ENCODE measurements at regions of chr11 and their contacts with region 1.

Region 1: GRCh38 chr11:43399983-43400630 is 41.4 kb downstream of the TTC17 start:
- DNase-seq: no peak
- H3K4me3 ChIP-seq: no peak overlapping the region
- H3K27ac ChIP-seq: no peak overlapping the region
- H3K4me1 ChIP-seq: no peaks in the 10 kb centered on the region
- H3K27me3 ChIP-seq: no peaks in the 10 kb centered on the region
- CTCF ChIP-seq: no peak
- EP300 ChIP-seq: no peak
- POLR2A ChIP-seq: no peak

Region 2: GRCh38 chr11:43327987-43328386 is 72.1 kb before region 1 on chr11:
- intact Hi-C with region 1: loop called (anchors 10 kb)
- DNase-seq: no peak
- H3K4me3 ChIP-seq: no peak overlapping the region
- H3K27ac ChIP-seq: no peak overlapping the region
- H3K4me1 ChIP-seq: no peaks in the 10 kb centered on the region
- H3K27me3 ChIP-seq: no peaks in the 10 kb centered on the region
- CTCF ChIP-seq: no peak
- EP300 ChIP-seq: no peak
- POLR2A ChIP-seq: no peak

Region 3: GRCh38 chr11:43367382-43368178 is 32.5 kb before region 1 on chr11:
- intact Hi-C with region 1: no loop called
- DNase-seq: no peak
- H3K4me3 ChIP-seq: no peak overlapping the region
- H3K27ac ChIP-seq: no peak overlapping the region
- H3K4me1 ChIP-seq: peaks cover 11 to 50% (median 37%) of the 10 kb centered on the region in 4 donors
- H3K27me3 ChIP-seq: no peaks in the 10 kb centered on the region
- CTCF ChIP-seq: no peak
- EP300 ChIP-seq: no peak
- POLR2A ChIP-seq: no peak